ENCODE measurements at regions of chr11 and their contacts with region 1.

Region 1: GRCh38 chr11:36131721-36132397 is 157.4 kb downstream of the COMMD9 start:
- DNase-seq: peak; percentile 35
- H3K4me3 ChIP-seq: no peak overlapping the region
- H3K27ac ChIP-seq: no peak overlapping the region
- H3K4me1 ChIP-seq: peaks cover 6% of the 10 kb centered on the region
- H3K27me3 ChIP-seq: peaks cover 51% of the 10 kb centered on the region
- CTCF ChIP-seq: peak; percentile 86

Region 2: GRCh38 chr11:35615921-35616900 is 515.6 kb before region 1 on chr11:
- intact Hi-C with region 1: loop called (anchors 2 kb)
- DNase-seq: no peak
- H3K4me3 ChIP-seq: no peak overlapping the region
- H3K27ac ChIP-seq: no peak overlapping the region
- H3K4me1 ChIP-seq: peaks cover 38% of the 10 kb centered on the region
- H3K27me3 ChIP-seq: peaks cover 73% of the 10 kb centered on the region
- CTCF ChIP-seq: peak; percentile 79

Measured in left ventricle myocardium inferior (tissue), 1 donor.